CD4-positive, alpha-beta T cell (primary cell): ENCODE measurements at regions of chr12 and their contacts with region 1.

Region 1: GRCh38 chr12:53079226-53080117 is at the start of gene SPRYD3:
- DNase-seq: peak; percentile 94 to 98 (median 96)
- ATAC-seq: peak; percentile 94
- H3K4me3 ChIP-seq: peak within 1 kb of the TSS; percentile 72
- H3K4me3 Mint-ChIP-seq: peak within 1 kb of the TSS; percentile 95
- H3K27ac ChIP-seq: peak within 1 kb of the TSS; percentile 82 to 85
- H3K27ac Mint-ChIP-seq: peak within 1 kb of the TSS; percentile 98
- H3K4me1 ChIP-seq: peaks cover 34% of the 10 kb centered on the region
- H3K4me1 Mint-ChIP-seq: peaks cover 40% of the 10 kb centered on the region
- H3K27me3 ChIP-seq: no peaks in the 10 kb centered on the region
- H3K27me3 Mint-ChIP-seq: no peaks in the 10 kb centered on the region
- CTCF ChIP-seq: no peak
- total RNA-seq, gene SPRYD3: 17.7 to 21.0 TPM

Region 2: GRCh38 chr12:53047221-53048042 is 32.0 kb before region 1 on chr12:
- CTCF ChIA-PET with region 1: interaction called, 6 read pairs
- POLR2A ChIA-PET with region 1: interaction called, 27 read pairs
- intact Hi-C with region 1: no loop called
- DNase-seq: peak; percentile 45 to 90 (median 64)
- ATAC-seq: peak; percentile 79
- H3K4me3 ChIP-seq: peak overlapping the region; percentile 93
- H3K4me3 Mint-ChIP-seq: peak overlapping the region; percentile 76
- H3K27ac ChIP-seq: peak overlapping the region; percentile 56 to 76
- H3K27ac Mint-ChIP-seq: peak overlapping the region; percentile 96
- H3K4me1 ChIP-seq: peaks cover 21% of the 10 kb centered on the region
- H3K4me1 Mint-ChIP-seq: peaks cover 25% of the 10 kb centered on the region
- H3K27me3 ChIP-seq: no peaks in the 10 kb centered on the region
- H3K27me3 Mint-ChIP-seq: no peaks in the 10 kb centered on the region
- CTCF ChIP-seq: no peak

Region 3: GRCh38 chr12:53065975-53066931 is 13.2 kb before region 1 on chr12:
- CTCF ChIA-PET with region 1: interaction called, 24 read pairs
- POLR2A ChIA-PET with region 1: interaction called, 18 read pairs
- intact Hi-C with region 1: no loop called
- DNase-seq: peak; percentile 49 to 84 (median 60)
- ATAC-seq: peak; percentile 69
- H3K4me3 ChIP-seq: no peak overlapping the region
- H3K4me3 Mint-ChIP-seq: no peak overlapping the region
- H3K27ac ChIP-seq: no peak overlapping the region
- H3K27ac Mint-ChIP-seq: no peak overlapping the region
- H3K4me1 ChIP-seq: peaks cover 11% of the 10 kb centered on the region
- H3K4me1 Mint-ChIP-seq: peaks cover 7% of the 10 kb centered on the region
- H3K27me3 ChIP-seq: no peaks in the 10 kb centered on the region
- H3K27me3 Mint-ChIP-seq: no peaks in the 10 kb centered on the region
- CTCF ChIP-seq: peak; percentile 93

Region 4: GRCh38 chr12:53098982-53099651 is 19.6 kb after region 1 on chr12:
- CTCF ChIA-PET with region 1: interaction called, 16 read pairs
- POLR2A ChIA-PET with region 1: interaction called, 37 read pairs
- intact Hi-C with region 1: loop called (anchors 1 to 2 kb)
- DNase-seq: peak; percentile 82 to 94 (median 86)
- ATAC-seq: peak; percentile 73
- H3K4me3 ChIP-seq: no peak overlapping the region
- H3K4me3 Mint-ChIP-seq: peak overlapping the region; percentile 71
- H3K27ac ChIP-seq: no peak overlapping the region
- H3K27ac Mint-ChIP-seq: peak overlapping the region; percentile 4
- H3K4me1 ChIP-seq: peaks cover 63% of the 10 kb centered on the region
- H3K4me1 Mint-ChIP-seq: peaks cover 48% of the 10 kb centered on the region
- H3K27me3 ChIP-seq: peaks cover 0 to 11% of the 10 kb centered on the region in 2 experiments
- H3K27me3 Mint-ChIP-seq: peaks cover 5% of the 10 kb centered on the region
- CTCF ChIP-seq: peak; percentile 97

Region 5: GRCh38 chr12:53231826-53232645 is 152.6 kb after region 1 on chr12 and contains the start of gene RARG:
- CTCF ChIA-PET with region 1: no interaction called
- POLR2A ChIA-PET with region 1: no interaction called
- intact Hi-C with region 1: no loop called
- DNase-seq: peak in 12 of 14 experiments; percentile 47 to 86 (median 66)
- ATAC-seq: peak; percentile 66
- H3K4me3 ChIP-seq: peak within 1 kb of the TSS; percentile 55
- H3K4me3 Mint-ChIP-seq: peak within 1 kb of the TSS; percentile 91
- H3K27ac ChIP-seq: peak within 1 kb of the TSS; percentile 55 to 86
- H3K27ac Mint-ChIP-seq: peak within 1 kb of the TSS; percentile 81
- H3K4me1 ChIP-seq: peaks cover 93% of the 10 kb centered on the region
- H3K4me1 Mint-ChIP-seq: peaks cover 72% of the 10 kb centered on the region
- H3K27me3 ChIP-seq: no peaks in the 10 kb centered on the region
- H3K27me3 Mint-ChIP-seq: no peaks in the 10 kb centered on the region
- CTCF ChIP-seq: no peak
- total RNA-seq, gene RARG: 14.0 to 15.8 TPM